Activated CD4-positive, alpha-beta memory T cell treated with anti-CD3 and anti-CD28 coated beads, Interleukin-2, amount 10 ng/mL, durations not matched to agents 7 days and 5 days (primary cell): ENCODE measurements at regions of chr10 and their contacts with region 1.

Region 1: GRCh38 chr10:28381903-28382347 is 79.1 kb upstream of the MPP7 start:
- DNase-seq: peak; percentile 85
- H3K4me3 Mint-ChIP-seq: no peak overlapping the region
- H3K27ac Mint-ChIP-seq: no peak overlapping the region
- H3K4me1 Mint-ChIP-seq: peaks cover 25% of the 10 kb centered on the region
- H3K27me3 Mint-ChIP-seq: peaks cover 6% of the 10 kb centered on the region

Region 2: GRCh38 chr10:28105561-28105960 is 276.4 kb before region 1 on chr10:
- CTCF ChIA-PET with region 1: no interaction called
- POLR2A ChIA-PET with region 1: no interaction called
- DNase-seq: no peak
- H3K4me3 Mint-ChIP-seq: no peak overlapping the region
- H3K27ac Mint-ChIP-seq: no peak overlapping the region
- H3K4me1 Mint-ChIP-seq: no peaks in the 10 kb centered on the region
- H3K27me3 Mint-ChIP-seq: no peaks in the 10 kb centered on the region

Region 3: GRCh38 chr10:28241741-28242399 is 140.1 kb before region 1 on chr10:
- CTCF ChIA-PET with region 1: interaction called, 122 read pairs
- POLR2A ChIA-PET with region 1: no interaction called
- DNase-seq: peak; percentile 34
- H3K4me3 Mint-ChIP-seq: no peak overlapping the region
- H3K27ac Mint-ChIP-seq: no peak overlapping the region
- H3K4me1 Mint-ChIP-seq: no peaks in the 10 kb centered on the region
- H3K27me3 Mint-ChIP-seq: no peaks in the 10 kb centered on the region

Region 4: GRCh38 chr10:28263136-28263820 is 118.6 kb before region 1 on chr10:
- CTCF ChIA-PET with region 1: interaction called, 10 read pairs
- POLR2A ChIA-PET with region 1: no interaction called
- DNase-seq: no peak
- H3K4me3 Mint-ChIP-seq: no peak overlapping the region
- H3K27ac Mint-ChIP-seq: no peak overlapping the region
- H3K4me1 Mint-ChIP-seq: peaks cover 4% of the 10 kb centered on the region
- H3K27me3 Mint-ChIP-seq: no peaks in the 10 kb centered on the region

Region 5: DNA sequence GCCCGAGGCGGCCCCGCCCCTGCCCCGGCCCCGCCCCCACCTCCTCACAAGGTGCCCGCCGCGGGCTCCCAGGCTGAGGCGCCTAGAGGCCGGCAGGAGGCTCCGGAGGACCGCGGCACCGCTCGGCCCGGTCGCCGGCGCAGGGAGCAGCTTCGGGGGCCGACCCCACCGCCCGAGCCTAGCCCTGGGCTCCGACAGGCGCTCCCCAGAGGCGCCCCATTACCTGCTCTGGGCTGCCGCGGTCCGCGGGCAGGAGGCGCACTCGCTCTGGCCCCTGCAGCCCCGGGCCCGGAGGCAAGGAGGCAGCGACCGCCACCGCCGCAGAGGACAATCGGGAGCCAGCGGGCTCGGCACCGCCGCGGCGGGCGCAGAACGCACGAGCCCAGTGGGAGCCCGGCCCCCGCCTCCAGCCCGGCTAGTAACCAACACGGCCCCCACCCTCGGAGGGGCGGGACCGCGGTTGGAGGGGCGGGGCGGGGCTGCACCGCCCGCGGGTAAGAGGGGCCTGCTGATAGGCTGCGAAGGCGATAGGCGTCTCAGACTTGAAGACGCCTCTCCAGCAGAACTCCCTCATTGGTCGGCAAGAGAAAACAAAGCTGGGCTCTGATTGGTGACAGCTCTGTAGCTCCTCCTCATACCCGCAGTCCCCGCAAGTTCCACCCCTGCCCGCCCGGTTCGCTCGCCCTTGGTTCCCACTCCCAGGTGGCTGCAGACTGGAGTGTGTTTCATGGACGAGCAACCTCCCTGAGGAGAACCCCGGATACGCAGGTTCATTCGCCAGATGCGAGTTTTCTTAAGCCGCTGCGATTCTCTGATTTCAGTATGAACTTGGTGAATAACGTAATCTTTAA is 79.1 kb before region 1 on chr10 and contains the start of gene MPP7:
- CTCF ChIA-PET with region 1: interaction called, 75 read pairs
- POLR2A ChIA-PET with region 1: interaction called, 21 read pairs
- DNase-seq: peak; percentile 96
- H3K4me3 Mint-ChIP-seq: peak within 1 kb of the TSS; percentile 83
- H3K27ac Mint-ChIP-seq: peak within 1 kb of the TSS; percentile 21
- H3K4me1 Mint-ChIP-seq: peaks cover 22% of the 10 kb centered on the region
- H3K27me3 Mint-ChIP-seq: peaks cover 29% of the 10 kb centered on the region
- total RNA-seq, gene MPP7: 4.0 to 4.3 TPM

Region 6: DNA sequence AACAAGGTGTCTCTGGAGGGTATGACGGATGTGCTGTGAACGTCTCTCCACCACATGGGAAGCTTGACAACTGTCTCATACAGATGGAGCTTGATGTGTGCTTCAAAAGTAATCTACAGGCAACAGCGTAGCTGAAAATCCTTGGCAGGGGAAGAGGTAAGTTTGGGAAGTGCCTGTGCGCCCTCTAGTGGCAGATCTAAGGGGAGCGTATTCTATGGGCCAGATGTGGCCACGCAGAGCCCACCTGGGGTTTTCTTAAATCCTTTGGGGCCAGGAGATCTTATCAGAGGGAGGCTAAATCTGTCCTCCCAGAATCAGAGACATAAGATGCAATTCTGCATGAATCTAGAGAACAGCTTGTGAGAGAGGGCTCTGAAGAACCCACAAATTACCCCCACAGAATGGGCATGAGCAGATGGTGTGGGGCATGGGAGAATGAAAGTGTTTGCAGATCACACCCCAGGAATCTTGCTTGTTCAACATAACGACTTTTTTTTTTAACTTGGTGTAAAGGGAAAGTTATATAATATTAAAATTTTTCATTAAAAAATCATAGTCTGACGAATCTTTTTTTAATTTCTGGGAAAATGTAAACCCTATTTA is 12.1 kb after region 1 on chr10:
- CTCF ChIA-PET with region 1: interaction called, 43 read pairs
- POLR2A ChIA-PET with region 1: no interaction called
- DNase-seq: peak; percentile 66
- H3K4me3 Mint-ChIP-seq: no peak overlapping the region
- H3K27ac Mint-ChIP-seq: no peak overlapping the region
- H3K4me1 Mint-ChIP-seq: peaks cover 4% of the 10 kb centered on the region
- H3K27me3 Mint-ChIP-seq: peaks cover 5% of the 10 kb centered on the region